CD14-positive monocyte (primary cell): ENCODE measurements at regions of chr17 and their contacts with region 1.

Region 1: GRCh38 chr17:74379495-74380085 is 12.3 kb downstream of the GPR142 start:
- DNase-seq: peak; percentile 76 to 84 (median 84)
- H3K4me3 ChIP-seq: peak overlapping the region in 1 of 3 experiments; percentile 43
- H3K4me3 Mint-ChIP-seq: no peak overlapping the region
- H3K27ac ChIP-seq: no peak overlapping the region
- H3K27ac Mint-ChIP-seq: no peak overlapping the region
- H3K4me1 ChIP-seq: peaks cover 8 to 15% of the 10 kb centered on the region in 2 donors
- H3K4me1 Mint-ChIP-seq: peaks cover 13% of the 10 kb centered on the region
- H3K27me3 ChIP-seq: no peaks in the 10 kb centered on the region
- H3K27me3 Mint-ChIP-seq: peaks cover 7 to 12% (median 8%) of the 10 kb centered on the region in 3 donors
- CTCF ChIP-seq: peak; percentile 96

Region 2: DNA sequence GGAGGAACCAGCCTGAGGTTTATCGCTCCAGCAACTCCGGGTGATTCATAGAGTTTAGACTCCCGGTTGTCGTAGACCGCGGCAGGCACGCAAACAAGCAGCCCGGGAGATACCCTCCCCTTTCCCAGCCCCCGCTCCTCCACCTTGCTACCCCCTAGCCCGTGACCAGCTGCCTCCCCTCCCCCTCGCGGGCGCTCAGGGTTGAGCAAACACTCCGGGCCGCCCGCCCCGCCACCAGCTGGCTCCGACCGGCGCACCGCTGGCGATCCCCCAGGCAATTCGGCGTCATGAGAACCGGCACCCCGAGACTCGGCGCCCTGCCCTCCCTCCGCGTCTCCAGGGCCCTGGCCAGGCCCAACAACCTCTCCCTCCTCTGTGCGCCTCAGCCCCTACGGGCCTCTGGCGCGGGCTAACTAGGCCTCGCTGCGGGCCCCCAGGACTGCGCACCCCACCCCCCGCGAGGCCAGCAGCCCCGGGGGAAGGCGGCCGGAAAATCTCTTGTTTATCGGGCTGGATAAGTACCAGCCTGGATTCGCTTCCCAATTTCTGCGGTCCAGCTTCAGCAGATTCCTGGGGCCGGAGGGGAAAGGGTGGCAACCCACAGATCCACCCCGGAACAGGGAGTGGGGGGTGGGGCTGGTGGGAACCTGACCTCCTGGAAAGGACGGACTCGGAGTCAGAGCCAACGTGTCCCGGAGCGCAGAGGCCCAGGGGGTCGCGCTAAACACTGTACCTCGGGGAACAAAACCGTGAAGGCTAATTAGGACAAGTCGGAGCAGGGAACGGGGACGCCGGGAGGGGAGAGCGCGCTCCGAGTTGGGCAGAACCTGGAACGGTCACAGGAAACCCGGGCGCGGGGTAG is 51.3 kb after region 1 on chr17:
- intact Hi-C with region 1: no loop called
- DNase-seq: peak; percentile 57 to 89 (median 57)
- H3K4me3 ChIP-seq: peak overlapping the region in 2 of 3 experiments; percentile 22 to 70
- H3K4me3 Mint-ChIP-seq: peak overlapping the region; percentile 78 to 91
- H3K27ac ChIP-seq: no peak overlapping the region
- H3K27ac Mint-ChIP-seq: peak overlapping the region in 1 of 7 donors; percentile 64
- H3K4me1 ChIP-seq: peaks cover 21 to 22% of the 10 kb centered on the region in 2 donors
- H3K4me1 Mint-ChIP-seq: peaks cover 18% of the 10 kb centered on the region
- H3K27me3 ChIP-seq: peaks cover 34 to 73% of the 10 kb centered on the region in 2 donors
- H3K27me3 Mint-ChIP-seq: peaks cover 76 to 89% (median 78%) of the 10 kb centered on the region in 3 donors
- CTCF ChIP-seq: no peak

Region 3: DNA sequence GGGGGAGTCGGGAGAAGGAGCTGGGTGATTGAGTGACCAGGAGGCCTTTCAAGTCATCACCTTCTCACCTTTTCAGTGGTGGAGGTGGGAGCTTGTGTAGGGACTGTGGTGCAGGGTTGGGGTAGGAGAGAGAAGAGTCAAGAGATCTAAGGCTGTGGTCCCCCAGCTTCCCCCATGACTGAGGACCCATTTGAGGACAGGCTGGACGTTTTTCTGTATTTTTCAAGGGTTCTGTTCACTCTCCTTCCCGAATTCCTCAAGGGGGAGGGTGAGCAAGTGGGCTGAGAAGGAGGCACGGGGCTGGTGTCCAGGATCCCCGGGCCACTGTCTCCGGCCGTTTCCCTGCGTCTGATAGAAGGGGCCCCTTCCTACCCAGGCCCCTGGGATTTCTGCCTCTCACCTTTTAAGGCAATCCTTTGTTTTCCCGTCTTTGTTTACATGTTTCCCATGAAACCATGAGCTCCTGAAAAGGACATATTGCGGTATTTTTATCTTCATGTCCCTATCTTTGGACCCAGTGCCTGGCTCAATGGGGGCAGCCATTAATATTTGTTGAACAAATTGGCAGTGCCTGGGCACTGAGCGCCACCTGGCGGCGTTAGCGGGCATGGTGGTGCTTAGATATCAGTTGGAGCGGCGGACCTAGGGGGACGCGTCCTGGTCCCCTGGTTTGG is 77.7 kb after region 1 on chr17:
- intact Hi-C with region 1: loop called (anchors 1 to 2 kb)
- DNase-seq: peak; percentile 67 to 83 (median 74)
- H3K4me3 ChIP-seq: no peak overlapping the region
- H3K4me3 Mint-ChIP-seq: peak overlapping the region in 1 of 2 donors; percentile 39
- H3K27ac ChIP-seq: no peak overlapping the region
- H3K27ac Mint-ChIP-seq: peak overlapping the region in 1 of 7 donors; percentile 66
- H3K4me1 ChIP-seq: peaks cover 32 to 41% of the 10 kb centered on the region in 2 donors
- H3K4me1 Mint-ChIP-seq: peaks cover 24% of the 10 kb centered on the region
- H3K27me3 ChIP-seq: peaks cover 0 to 8% of the 10 kb centered on the region in 2 donors
- H3K27me3 Mint-ChIP-seq: peaks cover 8 to 22% (median 9%) of the 10 kb centered on the region in 3 donors
- CTCF ChIP-seq: peak; percentile 97

Region 4: GRCh38 chr17:74493381-74493833 is 113.8 kb after region 1 on chr17:
- intact Hi-C with region 1: loop called (anchors 2 to 5 kb)
- DNase-seq: peak; percentile 67 to 79 (median 79)
- H3K4me3 ChIP-seq: no peak overlapping the region
- H3K4me3 Mint-ChIP-seq: no peak overlapping the region
- H3K27ac ChIP-seq: no peak overlapping the region
- H3K27ac Mint-ChIP-seq: peak overlapping the region in 1 of 7 donors; percentile 42
- H3K4me1 ChIP-seq: peaks cover 28 to 44% of the 10 kb centered on the region in 2 donors
- H3K4me1 Mint-ChIP-seq: peaks cover 41% of the 10 kb centered on the region
- H3K27me3 ChIP-seq: no peaks in the 10 kb centered on the region
- H3K27me3 Mint-ChIP-seq: peaks cover 0 to 5% (median 1%) of the 10 kb centered on the region in 3 donors
- CTCF ChIP-seq: peak; percentile 91

Region 5: GRCh38 chr17:74601944-74602572 is 222.5 kb after region 1 on chr17:
- intact Hi-C with region 1: loop called in 1 of 2 experiments (anchors 5 kb)
- DNase-seq: peak; percentile 58 to 67 (median 65)
- H3K4me3 ChIP-seq: peak overlapping the region in 2 of 3 experiments; percentile 10 to 60
- H3K4me3 Mint-ChIP-seq: peak overlapping the region; percentile 25 to 87
- H3K27ac ChIP-seq: peak overlapping the region; percentile 43 to 74
- H3K27ac Mint-ChIP-seq: peak overlapping the region; percentile 75 to 95 (median 87)
- H3K4me1 ChIP-seq: peaks cover 98 to 100% of the 10 kb centered on the region in 2 donors
- H3K4me1 Mint-ChIP-seq: peaks cover 98% of the 10 kb centered on the region
- H3K27me3 ChIP-seq: no peaks in the 10 kb centered on the region
- H3K27me3 Mint-ChIP-seq: peaks cover 0 to 15% (median 0%) of the 10 kb centered on the region in 3 donors
- CTCF ChIP-seq: peak; percentile 92

Region 6: GRCh38 chr17:74646231-74646630 is 266.6 kb after region 1 on chr17:
- intact Hi-C with region 1: loop called (anchors 10 kb)
- DNase-seq: peak; percentile 66 to 85 (median 81)
- H3K4me3 ChIP-seq: no peak overlapping the region
- H3K4me3 Mint-ChIP-seq: peak overlapping the region in 1 of 2 donors; percentile 22
- H3K27ac ChIP-seq: no peak overlapping the region
- H3K27ac Mint-ChIP-seq: peak overlapping the region in 6 of 7 donors; percentile 23 to 91 (median 76)
- H3K4me1 ChIP-seq: peaks cover 43 to 51% of the 10 kb centered on the region in 2 donors
- H3K4me1 Mint-ChIP-seq: peaks cover 50% of the 10 kb centered on the region
- H3K27me3 ChIP-seq: no peaks in the 10 kb centered on the region
- H3K27me3 Mint-ChIP-seq: peaks cover 5 to 17% (median 10%) of the 10 kb centered on the region in 3 donors
- CTCF ChIP-seq: peak; percentile 73

Region 7: GRCh38 chr17:74736513-74737298 is 357.1 kb after region 1 on chr17 and contains the start of gene RAB37:
- intact Hi-C with region 1: loop called (anchors 5 to 10 kb)
- DNase-seq: peak; percentile 73 to 83 (median 76)
- H3K4me3 ChIP-seq: peak within 1 kb of the TSS; percentile 46 to 89 (median 55)
- H3K4me3 Mint-ChIP-seq: peak within 1 kb of the TSS; percentile 86 to 93
- H3K27ac ChIP-seq: peak within 1 kb of the TSS; percentile 41 to 75
- H3K27ac Mint-ChIP-seq: peak within 1 kb of the TSS; percentile 84 to 94 (median 91)
- H3K4me1 ChIP-seq: peaks cover 55 to 73% of the 10 kb centered on the region in 2 donors
- H3K4me1 Mint-ChIP-seq: peaks cover 62% of the 10 kb centered on the region
- H3K27me3 ChIP-seq: no peaks in the 10 kb centered on the region
- H3K27me3 Mint-ChIP-seq: peaks cover 0 to 6% (median 0%) of the 10 kb centered on the region in 3 donors
- CTCF ChIP-seq: peak; percentile 67
- polyA plus RNA-seq, gene RAB37: 26.8 to 40.9 (median 33.1) TPM

Region 8: GRCh38 chr17:74864866-74865395 is 485.3 kb after region 1 on chr17:
- intact Hi-C with region 1: loop called in 1 of 2 experiments (anchors 10 kb)
- DNase-seq: peak; percentile 65 to 84 (median 68)
- H3K4me3 ChIP-seq: no peak overlapping the region
- H3K4me3 Mint-ChIP-seq: no peak overlapping the region
- H3K27ac ChIP-seq: no peak overlapping the region
- H3K27ac Mint-ChIP-seq: peak overlapping the region in 4 of 7 donors; percentile 46 to 66 (median 63)
- H3K4me1 ChIP-seq: peaks cover 19 to 24% of the 10 kb centered on the region in 2 donors
- H3K4me1 Mint-ChIP-seq: peaks cover 22% of the 10 kb centered on the region
- H3K27me3 ChIP-seq: peaks cover 17 to 27% of the 10 kb centered on the region in 2 donors
- H3K27me3 Mint-ChIP-seq: peaks cover 25 to 40% (median 36%) of the 10 kb centered on the region in 3 donors
- CTCF ChIP-seq: peak; percentile 93